ENCODE measurements at regions of chr5 and their contacts with region 1.

Region 1: GRCh38 chr5:137320056-137321045 is 178.8 kb downstream of the SPOCK1 start:
- DNase-seq: peak in 4 of 5 donors; percentile 4 to 19 (median 8)
- H3K4me3 ChIP-seq: no peak overlapping the region
- H3K4me3 Mint-ChIP-seq: no peak overlapping the region
- H3K27ac ChIP-seq: no peak overlapping the region
- H3K27ac Mint-ChIP-seq: no peak overlapping the region
- H3K4me1 ChIP-seq: no peaks in the 10 kb centered on the region
- H3K4me1 Mint-ChIP-seq: no peaks in the 10 kb centered on the region
- H3K27me3 ChIP-seq: no peaks in the 10 kb centered on the region
- H3K27me3 Mint-ChIP-seq: peaks cover 9% of the 10 kb centered on the region in 2 donors

Region 2: DNA sequence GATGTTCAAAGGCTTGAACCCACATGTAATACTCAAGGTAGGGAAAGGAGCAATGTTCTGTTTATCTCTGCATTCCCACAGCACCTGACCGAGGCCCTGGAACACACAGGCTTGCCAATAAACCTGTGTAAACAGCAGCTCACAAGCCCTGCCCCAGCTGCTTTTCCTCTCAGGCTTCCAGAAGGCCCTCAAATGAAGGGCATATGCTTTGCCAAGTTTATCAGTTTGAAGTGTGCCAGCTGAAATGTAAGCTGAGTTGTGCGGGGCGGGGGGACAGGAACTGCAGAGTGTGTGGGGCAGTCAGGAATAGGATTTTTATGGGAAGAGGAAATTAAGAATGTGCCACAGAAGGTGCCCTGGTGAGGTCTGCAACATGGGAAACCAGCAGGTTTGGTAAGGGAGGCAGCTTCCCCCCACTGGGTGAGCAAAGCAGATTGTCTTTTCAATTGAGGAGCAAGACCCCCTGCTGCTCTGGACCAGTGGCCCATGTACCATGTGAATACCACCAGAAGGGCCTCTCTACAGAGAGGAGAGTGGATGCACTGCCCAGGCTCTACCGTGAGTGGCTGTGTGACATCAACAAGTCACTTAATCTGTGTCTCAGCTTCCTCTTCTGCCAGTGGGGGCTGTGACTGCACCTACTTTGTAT is 16.0 kb before region 1 on chr5:
- CTCF ChIA-PET with region 1: interaction called, 12 read pairs
- POLR2A ChIA-PET with region 1: no interaction called
- intact Hi-C with region 1: no loop called
- DNase-seq: no peak
- H3K4me3 ChIP-seq: no peak overlapping the region
- H3K4me3 Mint-ChIP-seq: no peak overlapping the region
- H3K27ac ChIP-seq: no peak overlapping the region
- H3K27ac Mint-ChIP-seq: no peak overlapping the region
- H3K4me1 ChIP-seq: no peaks in the 10 kb centered on the region
- H3K4me1 Mint-ChIP-seq: no peaks in the 10 kb centered on the region
- H3K27me3 ChIP-seq: no peaks in the 10 kb centered on the region
- H3K27me3 Mint-ChIP-seq: peaks cover 0 to 12% of the 10 kb centered on the region in 2 donors

Region 3: GRCh38 chr5:137310051-137310730 is 10.2 kb before region 1 on chr5:
- CTCF ChIA-PET with region 1: interaction called, 12 read pairs
- POLR2A ChIA-PET with region 1: no interaction called
- intact Hi-C with region 1: no loop called
- DNase-seq: no peak
- H3K4me3 ChIP-seq: no peak overlapping the region
- H3K4me3 Mint-ChIP-seq: no peak overlapping the region
- H3K27ac ChIP-seq: no peak overlapping the region
- H3K27ac Mint-ChIP-seq: no peak overlapping the region
- H3K4me1 ChIP-seq: no peaks in the 10 kb centered on the region
- H3K4me1 Mint-ChIP-seq: no peaks in the 10 kb centered on the region
- H3K27me3 ChIP-seq: no peaks in the 10 kb centered on the region
- H3K27me3 Mint-ChIP-seq: peaks cover 0 to 5% of the 10 kb centered on the region in 2 donors

Region 4: DNA sequence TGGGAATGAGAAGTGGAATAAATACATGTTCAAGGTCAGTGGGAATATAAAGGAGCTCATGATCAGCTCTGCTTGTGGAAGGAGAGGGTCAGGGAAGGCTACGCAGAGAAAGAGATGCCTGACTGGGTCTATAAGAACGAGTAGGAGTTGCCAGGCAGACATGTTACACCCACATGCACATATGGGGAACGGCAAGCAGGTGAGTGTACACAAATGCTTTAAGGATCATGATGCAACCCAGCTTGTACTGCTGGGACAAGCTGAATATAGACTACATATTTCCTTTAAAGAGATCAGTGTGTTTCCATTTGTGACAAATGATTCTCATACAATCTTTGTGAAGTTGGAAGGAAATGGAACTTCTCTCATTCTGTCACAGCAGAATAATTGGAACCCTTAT is 37.1 kb after region 1 on chr5:
- CTCF ChIA-PET with region 1: no interaction called
- POLR2A ChIA-PET with region 1: no interaction called
- intact Hi-C with region 1: no loop called
- DNase-seq: no peak
- H3K4me3 ChIP-seq: no peak overlapping the region
- H3K4me3 Mint-ChIP-seq: no peak overlapping the region
- H3K27ac ChIP-seq: no peak overlapping the region
- H3K27ac Mint-ChIP-seq: peak overlapping the region in 1 of 7 donors; percentile 1
- H3K4me1 ChIP-seq: no peaks in the 10 kb centered on the region
- H3K4me1 Mint-ChIP-seq: no peaks in the 10 kb centered on the region
- H3K27me3 ChIP-seq: no peaks in the 10 kb centered on the region
- H3K27me3 Mint-ChIP-seq: peaks cover 8 to 13% of the 10 kb centered on the region in 2 donors

Region 5: DNA sequence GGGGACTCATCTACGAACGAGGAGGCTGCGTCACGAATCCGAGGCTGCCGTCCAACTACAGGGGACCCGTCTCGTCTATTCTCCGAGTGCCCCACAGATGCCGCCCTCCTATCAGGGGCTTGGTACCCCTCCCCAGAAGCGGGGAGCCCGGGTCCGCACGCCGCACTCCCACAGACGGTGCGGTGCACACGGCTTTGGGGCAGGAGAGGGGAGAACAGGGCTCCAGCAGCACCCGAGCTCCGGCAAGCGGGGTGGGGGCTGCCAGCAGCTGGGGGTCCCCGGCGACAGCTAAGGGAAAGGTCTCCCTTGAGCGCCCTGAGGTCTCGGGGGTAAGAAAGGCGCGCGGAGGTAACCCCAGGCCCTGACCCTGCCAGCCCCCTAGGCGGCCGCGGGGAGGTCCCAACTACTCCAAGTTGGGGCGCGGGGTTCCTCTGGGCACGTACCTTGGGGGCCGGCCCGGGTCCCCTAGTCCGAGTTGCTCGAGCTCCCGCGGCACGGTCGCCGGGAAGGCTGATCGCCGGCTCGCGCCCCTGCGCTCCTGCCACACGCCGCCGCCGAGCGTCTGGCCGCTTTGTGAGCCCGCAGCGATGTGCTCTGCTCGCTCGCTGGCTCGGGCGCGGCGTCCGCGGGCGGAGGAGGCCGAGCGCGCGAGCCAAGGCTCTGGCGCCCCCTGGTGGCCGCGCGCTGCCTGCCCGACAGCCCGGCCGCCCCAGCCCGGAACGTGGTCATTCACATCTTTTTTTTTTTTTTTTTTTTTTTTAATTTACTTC is 178.6 kb after region 1 on chr5 and contains the start of gene SPOCK1:
- CTCF ChIA-PET with region 1: no interaction called
- POLR2A ChIA-PET with region 1: no interaction called
- intact Hi-C with region 1: loop called (anchors 2 kb)
- DNase-seq: peak in 4 of 5 donors; percentile 17 to 35 (median 33)
- H3K4me3 ChIP-seq: no peak within 1 kb of the TSS
- H3K4me3 Mint-ChIP-seq: no peak within 1 kb of the TSS
- H3K27ac ChIP-seq: no peak within 1 kb of the TSS
- H3K27ac Mint-ChIP-seq: no peak within 1 kb of the TSS
- H3K4me1 ChIP-seq: no peaks in the 10 kb centered on the region
- H3K4me1 Mint-ChIP-seq: no peaks in the 10 kb centered on the region
- H3K27me3 ChIP-seq: no peaks in the 10 kb centered on the region
- H3K27me3 Mint-ChIP-seq: peaks cover 14 to 16% of the 10 kb centered on the region in 2 donors
- total RNA-seq, gene SPOCK1: not detected

Measured in CD4-positive, alpha-beta memory T cell (primary cell).